ENCODE measurements at regions of chr6 and their contacts with region 1.

Region 1: GRCh38 chr6:45922728-45923351 is 92.8 kb downstream of the CLIC5 start:
- DNase-seq: peak; percentile 83
- H3K4me3 Mint-ChIP-seq: peak overlapping the region; percentile 67
- H3K27ac Mint-ChIP-seq: peak overlapping the region; percentile 97
- H3K4me1 Mint-ChIP-seq: peaks cover 52% of the 10 kb centered on the region
- H3K27me3 Mint-ChIP-seq: no peaks in the 10 kb centered on the region

Region 2: GRCh38 chr6:44642870-44643529 is 1279.8 kb before region 1 on chr6:
- CTCF ChIA-PET with region 1: interaction called, 3 read pairs
- POLR2A ChIA-PET with region 1: no interaction called
- intact Hi-C with region 1: loop called (anchors 1 kb)
- DNase-seq: peak; percentile 88
- H3K4me3 Mint-ChIP-seq: peak overlapping the region; percentile 33
- H3K27ac Mint-ChIP-seq: peak overlapping the region; percentile 96
- H3K4me1 Mint-ChIP-seq: peaks cover 39% of the 10 kb centered on the region
- H3K27me3 Mint-ChIP-seq: no peaks in the 10 kb centered on the region

Region 3: GRCh38 chr6:45421709-45422502 is 500.9 kb before region 1 on chr6:
- CTCF ChIA-PET with region 1: interaction called, 3 read pairs
- POLR2A ChIA-PET with region 1: interaction called, 8 read pairs
- intact Hi-C with region 1: loop called (anchors 1 kb)
- DNase-seq: peak; percentile 78
- H3K4me3 Mint-ChIP-seq: peak overlapping the region; percentile 91
- H3K27ac Mint-ChIP-seq: peak overlapping the region; percentile 97
- H3K4me1 Mint-ChIP-seq: peaks cover 41% of the 10 kb centered on the region
- H3K27me3 Mint-ChIP-seq: no peaks in the 10 kb centered on the region

Region 4: GRCh38 chr6:45608252-45608911 is 314.5 kb before region 1 on chr6:
- CTCF ChIA-PET with region 1: interaction called, 3 read pairs
- POLR2A ChIA-PET with region 1: no interaction called
- intact Hi-C with region 1: loop called (anchors 5 kb)
- DNase-seq: peak; percentile 34
- H3K4me3 Mint-ChIP-seq: no peak overlapping the region
- H3K27ac Mint-ChIP-seq: peak overlapping the region; percentile 86
- H3K4me1 Mint-ChIP-seq: peaks cover 39% of the 10 kb centered on the region
- H3K27me3 Mint-ChIP-seq: peaks cover 1% of the 10 kb centered on the region

Region 5: GRCh38 chr6:45801471-45802289 is 121.2 kb before region 1 on chr6:
- CTCF ChIA-PET with region 1: interaction called, 11 read pairs
- POLR2A ChIA-PET with region 1: interaction called, 13 read pairs
- intact Hi-C with region 1: loop called (anchors 1 kb)
- DNase-seq: peak; percentile 84
- H3K4me3 Mint-ChIP-seq: no peak overlapping the region
- H3K27ac Mint-ChIP-seq: no peak overlapping the region
- H3K4me1 Mint-ChIP-seq: no peaks in the 10 kb centered on the region
- H3K27me3 Mint-ChIP-seq: peaks cover 8% of the 10 kb centered on the region

Region 6: GRCh38 chr6:46221222-46221793 is 298.5 kb after region 1 on chr6:
- CTCF ChIA-PET with region 1: no interaction called
- POLR2A ChIA-PET with region 1: no interaction called
- intact Hi-C with region 1: loop called (anchors 5 kb)
- DNase-seq: no peak
- H3K4me3 Mint-ChIP-seq: no peak overlapping the region
- H3K27ac Mint-ChIP-seq: peak overlapping the region; percentile 73
- H3K4me1 Mint-ChIP-seq: peaks cover 24% of the 10 kb centered on the region
- H3K27me3 Mint-ChIP-seq: no peaks in the 10 kb centered on the region

Region 7: GRCh38 chr6:46243754-46244153 is 320.9 kb after region 1 on chr6:
- CTCF ChIA-PET with region 1: no interaction called
- POLR2A ChIA-PET with region 1: no interaction called
- intact Hi-C with region 1: no loop called
- DNase-seq: no peak
- H3K4me3 Mint-ChIP-seq: no peak overlapping the region
- H3K27ac Mint-ChIP-seq: no peak overlapping the region
- H3K4me1 Mint-ChIP-seq: no peaks in the 10 kb centered on the region
- H3K27me3 Mint-ChIP-seq: peaks cover 4% of the 10 kb centered on the region

Measured in activated CD4-positive, alpha-beta memory T cell treated with anti-CD3 and anti-CD28 coated beads for 36 hours (primary cell).